AG04450 (cell line): ENCODE measurements at regions of chr11 and their contacts with region 1.

Region 1: GRCh38 chr11:130861902-130862860 is 54.1 kb downstream of the SNX19 start:
- DNase-seq: peak; percentile 93
- H3K4me3 ChIP-seq: no peak overlapping the region
- H3K27ac ChIP-seq: no peak overlapping the region
- H3K27me3 ChIP-seq: no peaks in the 10 kb centered on the region
- CTCF ChIP-seq: peak; percentile 100

Region 2: GRCh38 chr11:130390071-130390758 is 472.0 kb before region 1 on chr11:
- CTCF ChIA-PET with region 1: interaction called, 11 read pairs
- POLR2A ChIA-PET with region 1: no interaction called
- DNase-seq: peak; percentile 97
- H3K4me3 ChIP-seq: no peak overlapping the region
- H3K27ac ChIP-seq: peak overlapping the region; percentile 62
- H3K27me3 ChIP-seq: peaks cover 20% of the 10 kb centered on the region
- CTCF ChIP-seq: peak; percentile 79

Region 3: DNA sequence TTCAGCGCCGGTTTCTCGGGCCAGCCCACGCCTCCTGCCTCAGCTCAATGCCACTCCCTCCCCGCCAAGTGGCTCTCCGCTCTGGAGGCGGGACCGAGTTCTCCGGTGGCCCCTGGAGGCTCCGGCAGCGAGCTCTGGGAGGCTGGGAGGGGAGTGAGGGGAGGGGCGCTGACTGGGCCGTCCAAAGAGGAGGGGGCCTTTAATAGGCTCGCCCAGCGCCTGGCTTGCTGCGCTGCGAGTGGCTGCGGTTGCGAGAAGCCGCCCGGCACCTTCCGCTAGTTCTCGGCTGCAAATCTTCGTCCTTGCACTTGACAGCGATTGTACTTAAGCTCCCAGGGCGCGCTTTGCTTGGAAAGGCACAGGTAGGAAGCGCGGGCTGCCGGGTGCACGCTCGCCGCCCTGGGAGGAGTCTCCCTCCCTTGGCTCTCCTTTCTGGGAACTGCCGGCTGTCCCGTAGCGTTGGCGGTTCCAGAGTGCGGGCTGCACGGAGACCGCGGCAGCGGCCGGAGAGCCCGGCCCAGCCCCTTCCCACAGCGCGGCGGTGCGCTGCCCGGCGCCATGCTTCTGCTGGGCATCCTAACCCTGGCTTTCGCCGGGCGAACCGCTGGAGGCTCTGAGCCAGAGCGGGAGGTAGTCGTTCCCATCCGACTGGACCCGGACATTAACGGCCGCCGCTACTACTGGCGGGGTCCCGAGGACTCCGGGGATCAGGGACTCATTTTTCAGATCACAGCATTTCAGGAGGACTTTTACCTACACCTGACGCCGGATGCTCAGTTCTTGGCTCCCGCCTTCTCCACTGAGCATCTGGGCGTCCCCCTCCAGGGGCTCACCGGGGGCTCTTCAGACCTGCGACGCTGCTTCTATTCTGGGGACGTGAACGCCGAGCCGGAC is 413.5 kb before region 1 on chr11 and contains the start of gene ADAMTS15:
- CTCF ChIA-PET with region 1: interaction called, 27 read pairs
- POLR2A ChIA-PET with region 1: no interaction called
- DNase-seq: no peak
- H3K4me3 ChIP-seq: peak within 1 kb of the TSS; percentile 60
- H3K27ac ChIP-seq: peak within 1 kb of the TSS; percentile 31
- H3K27me3 ChIP-seq: no peaks in the 10 kb centered on the region
- CTCF ChIP-seq: no peak
- polyA plus RNA-seq, gene ADAMTS15: 4.7 and 5.8 TPM in 2 replicates

Region 4: DNA sequence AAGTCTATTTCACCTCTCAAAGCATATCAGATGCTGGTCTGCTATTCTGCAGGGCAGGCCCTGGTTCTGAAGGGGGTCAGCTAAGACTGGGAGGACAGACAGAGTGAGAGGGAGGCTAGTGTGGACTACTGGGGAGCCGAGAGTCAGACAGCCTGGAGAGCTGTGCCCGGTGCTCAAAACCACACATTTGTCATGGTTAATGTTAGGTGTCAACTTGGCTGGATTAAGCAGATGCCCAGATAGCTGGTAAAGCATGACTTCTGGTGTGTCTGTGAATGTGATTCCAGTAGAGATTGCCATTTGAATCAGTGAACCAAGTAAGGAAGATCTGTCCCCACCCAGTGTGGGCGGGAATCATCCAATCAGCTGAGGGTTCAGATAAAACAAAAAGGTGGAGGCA is 48.5 kb before region 1 on chr11:
- CTCF ChIA-PET with region 1: no interaction called
- POLR2A ChIA-PET with region 1: no interaction called
- DNase-seq: no peak
- H3K4me3 ChIP-seq: no peak overlapping the region
- H3K27ac ChIP-seq: no peak overlapping the region
- H3K27me3 ChIP-seq: peaks cover 7% of the 10 kb centered on the region
- CTCF ChIP-seq: no peak

Region 5: GRCh38 chr11:130839981-130840666 is 22.1 kb before region 1 on chr11:
- CTCF ChIA-PET with region 1: interaction called, 25 read pairs
- POLR2A ChIA-PET with region 1: no interaction called
- DNase-seq: peak; percentile 24
- H3K4me3 ChIP-seq: no peak overlapping the region
- H3K27ac ChIP-seq: no peak overlapping the region
- H3K27me3 ChIP-seq: no peaks in the 10 kb centered on the region
- CTCF ChIP-seq: no peak

Region 6: DNA sequence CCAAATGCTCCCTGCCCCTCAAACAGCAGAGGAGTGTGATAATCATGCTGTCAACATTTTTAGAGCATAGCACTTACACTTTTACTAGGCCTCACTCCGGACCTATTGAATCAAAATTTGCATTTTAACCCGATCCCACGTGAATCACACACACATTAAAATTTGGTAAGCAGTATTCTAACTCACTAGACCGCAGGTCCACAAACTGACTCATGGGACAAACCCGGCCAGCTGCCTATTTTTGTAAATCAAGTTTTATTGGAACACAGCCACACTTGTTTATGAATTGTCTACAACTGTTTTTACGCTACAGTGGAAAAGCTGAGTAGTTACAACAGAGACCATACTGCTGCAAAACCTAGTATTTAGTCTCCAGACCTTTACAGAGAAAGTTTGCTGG is 10.8 kb after region 1 on chr11:
- CTCF ChIA-PET with region 1: interaction called, 30 read pairs
- POLR2A ChIA-PET with region 1: no interaction called
- DNase-seq: peak; percentile 62
- H3K4me3 ChIP-seq: no peak overlapping the region
- H3K27ac ChIP-seq: peak overlapping the region; percentile 87
- H3K27me3 ChIP-seq: no peaks in the 10 kb centered on the region
- CTCF ChIP-seq: no peak

Region 7: GRCh38 chr11:130894322-130895025 is 32.3 kb after region 1 on chr11:
- CTCF ChIA-PET with region 1: interaction called, 44 read pairs
- POLR2A ChIA-PET with region 1: no interaction called
- DNase-seq: peak; percentile 55
- H3K4me3 ChIP-seq: no peak overlapping the region
- H3K27ac ChIP-seq: no peak overlapping the region
- H3K27me3 ChIP-seq: no peaks in the 10 kb centered on the region
- CTCF ChIP-seq: peak; percentile 91

Region 8: DNA sequence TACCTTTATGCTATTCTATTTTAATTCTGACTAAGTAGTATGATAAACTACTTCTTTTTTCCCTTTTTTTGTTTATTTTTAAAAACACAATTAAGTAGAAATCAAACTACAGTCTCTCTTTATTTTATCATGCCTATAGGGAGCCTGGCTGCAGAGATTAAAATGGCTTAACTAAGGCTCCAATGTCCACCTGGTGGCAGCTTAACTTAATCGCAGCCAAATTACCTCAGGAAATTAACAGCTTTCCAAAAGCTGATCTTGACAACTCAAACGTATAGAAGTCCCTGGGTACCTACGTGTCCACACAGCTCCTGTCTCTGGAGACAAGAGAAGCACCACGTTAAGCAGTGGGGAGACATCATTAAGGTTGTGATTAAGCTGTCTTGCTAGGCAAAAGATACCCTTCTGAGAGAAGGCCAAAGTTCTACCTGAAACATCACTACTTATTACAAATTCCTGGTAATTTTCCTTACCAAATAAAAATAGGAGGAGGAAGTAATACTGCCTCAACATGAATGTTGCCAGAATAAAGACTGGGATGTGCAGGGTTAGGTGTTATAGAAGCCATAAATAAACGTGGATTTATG is 117.3 kb after region 1 on chr11:
- CTCF ChIA-PET with region 1: no interaction called
- POLR2A ChIA-PET with region 1: no interaction called
- DNase-seq: peak; percentile 30
- H3K4me3 ChIP-seq: no peak overlapping the region
- H3K27ac ChIP-seq: no peak overlapping the region
- H3K27me3 ChIP-seq: peaks cover 8% of the 10 kb centered on the region
- CTCF ChIP-seq: peak; percentile 77

Region 9: DNA sequence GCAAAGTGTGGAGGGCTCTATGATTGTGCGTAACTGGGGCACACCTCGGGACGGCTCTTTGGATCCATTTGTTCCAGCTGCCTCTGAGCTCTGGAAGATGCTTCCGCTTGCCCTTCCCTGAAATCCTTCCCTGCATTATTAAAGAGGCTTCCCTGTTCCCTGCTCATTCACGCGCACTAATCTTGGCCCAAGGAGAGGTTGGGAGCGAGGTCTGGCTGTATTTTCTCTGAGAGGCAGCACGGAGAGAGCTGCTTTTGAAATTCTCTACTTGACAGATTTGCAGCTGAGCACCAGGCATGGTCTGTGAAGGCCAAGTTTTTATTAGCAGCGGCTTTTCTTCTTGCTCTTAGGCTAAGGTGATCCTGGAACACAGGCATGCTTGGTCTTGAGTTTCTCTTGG is 413.4 kb after region 1 on chr11:
- CTCF ChIA-PET with region 1: no interaction called
- POLR2A ChIA-PET with region 1: no interaction called
- DNase-seq: no peak
- H3K4me3 ChIP-seq: no peak overlapping the region
- H3K27ac ChIP-seq: no peak overlapping the region
- H3K27me3 ChIP-seq: no peaks in the 10 kb centered on the region
- CTCF ChIP-seq: no peak